Naive thymus-derived CD8-positive, alpha-beta T cell (primary cell): ENCODE measurements at regions of chr17 and their contacts with region 1.

Region 1: DNA sequence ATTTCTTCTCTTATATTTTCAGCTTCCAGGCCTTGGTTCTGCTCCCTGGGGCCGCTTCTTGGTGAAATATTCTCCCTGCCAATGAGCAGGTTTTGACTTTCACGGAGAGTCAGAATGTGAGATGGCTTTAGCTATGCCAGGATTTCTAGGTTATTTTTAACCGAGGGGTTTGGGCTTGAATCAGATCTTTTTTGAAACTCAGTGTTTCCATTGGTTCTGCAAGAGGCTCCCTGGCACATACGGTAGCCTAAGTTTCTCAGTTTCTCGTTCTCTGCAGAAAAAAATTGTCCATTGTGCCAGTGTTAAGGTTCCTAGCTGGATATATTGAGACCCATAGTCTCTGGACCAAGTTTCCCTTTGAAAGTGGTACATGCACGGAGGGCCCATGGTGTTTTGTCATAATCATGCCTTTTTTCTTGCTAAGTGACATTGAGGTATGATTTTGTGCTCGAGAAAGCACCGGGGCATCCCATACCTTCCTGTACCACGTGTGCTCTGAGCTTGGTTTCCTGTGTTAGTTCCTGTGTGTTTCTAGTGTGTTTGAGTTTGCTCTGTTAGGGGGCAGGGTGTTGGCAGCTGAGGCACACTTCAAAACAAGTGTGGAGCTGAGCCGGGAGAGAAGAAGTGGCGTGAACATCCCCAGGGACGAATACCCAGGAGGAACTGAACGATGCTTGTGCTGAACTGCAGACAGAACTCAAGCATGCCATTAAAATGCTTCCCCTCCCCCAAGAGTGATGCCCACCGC is 127.2 kb downstream of the HS3ST3B1 start:
- DNase-seq: peak; percentile 9 to 76 (median 54)
- ATAC-seq: peak; percentile 96 to 99
- H3K4me3 Mint-ChIP-seq: peak overlapping the region; percentile 69 to 91 (median 83)
- H3K27ac Mint-ChIP-seq: peak overlapping the region; percentile 82 to 100 (median 94)
- H3K4me1 Mint-ChIP-seq: peaks cover 37 to 68% (median 64%) of the 10 kb centered on the region in 4 donors
- H3K27me3 Mint-ChIP-seq: no peaks in the 10 kb centered on the region

Region 2: DNA sequence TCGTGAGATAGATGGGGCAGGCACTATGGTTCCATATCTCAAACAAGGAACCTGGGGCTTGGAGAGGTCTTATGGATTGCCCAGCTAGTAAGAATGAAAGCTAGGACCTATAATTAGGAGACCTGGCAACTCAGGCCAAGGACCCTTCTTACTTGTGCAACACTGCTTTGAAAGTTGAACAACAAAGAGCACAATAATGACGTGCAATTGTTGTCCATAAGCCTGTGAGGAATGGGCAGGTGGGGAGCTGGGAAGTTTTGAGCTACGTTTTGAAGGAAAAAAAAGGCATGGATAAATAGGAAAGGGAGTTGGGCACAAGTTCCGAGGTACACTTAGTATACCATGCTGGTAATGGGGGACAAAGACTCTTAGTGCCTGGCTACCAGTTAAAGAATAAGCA is 22.9 kb before region 1 on chr17:
- POLR2A ChIA-PET with region 1: interaction called, 33 read pairs
- DNase-seq: no peak
- ATAC-seq: no peak
- H3K4me3 Mint-ChIP-seq: peak overlapping the region in 5 of 10 donors; percentile 34 to 70 (median 51)
- H3K27ac Mint-ChIP-seq: peak overlapping the region in 8 of 10 donors; percentile 4 to 79 (median 44)
- H3K4me1 Mint-ChIP-seq: peaks cover 18 to 39% (median 30%) of the 10 kb centered on the region in 4 donors
- H3K27me3 Mint-ChIP-seq: no peaks in the 10 kb centered on the region

Region 3: GRCh38 chr17:14474591-14474990 is 46.5 kb after region 1 on chr17:
- POLR2A ChIA-PET with region 1: no interaction called
- DNase-seq: no peak
- ATAC-seq: no peak
- H3K4me3 Mint-ChIP-seq: no peak overlapping the region
- H3K27ac Mint-ChIP-seq: no peak overlapping the region
- H3K4me1 Mint-ChIP-seq: peaks cover 0 to 2% (median under 1%) of the 10 kb centered on the region in 4 donors
- H3K27me3 Mint-ChIP-seq: peaks cover 0 to 2% (median 0%) of the 10 kb centered on the region in 5 donors